OCI-LY7 (cell line): ENCODE measurements at regions of chr9 and their contacts with region 1.

Region 1: GRCh38 chr9:18442629-18443491 is 31.1 kb upstream of the ADAMTSL1 start:
- DNase-seq: peak; percentile 70
- H3K4me3 ChIP-seq: no peak overlapping the region
- H3K27ac ChIP-seq: no peak overlapping the region
- H3K4me1 ChIP-seq: no peaks in the 10 kb centered on the region
- CTCF ChIP-seq: peak; percentile 98

Region 2: GRCh38 chr9:17531642-17532254 is 911.1 kb before region 1 on chr9:
- CTCF ChIA-PET with region 1: no interaction called
- POLR2A ChIA-PET with region 1: interaction called, 11 read pairs
- intact Hi-C with region 1: no loop called
- DNase-seq: peak; percentile 29
- H3K4me3 ChIP-seq: no peak overlapping the region
- H3K27ac ChIP-seq: no peak overlapping the region
- H3K4me1 ChIP-seq: no peaks in the 10 kb centered on the region
- CTCF ChIP-seq: peak; percentile 83

Region 3: GRCh38 chr9:17810728-17811571 is 631.9 kb before region 1 on chr9:
- CTCF ChIA-PET with region 1: no interaction called
- POLR2A ChIA-PET with region 1: no interaction called
- intact Hi-C with region 1: loop called (anchors 2 kb)
- DNase-seq: peak; percentile 68
- H3K4me3 ChIP-seq: no peak overlapping the region
- H3K27ac ChIP-seq: no peak overlapping the region
- H3K4me1 ChIP-seq: no peaks in the 10 kb centered on the region
- CTCF ChIP-seq: peak; percentile 97

Region 4: DNA sequence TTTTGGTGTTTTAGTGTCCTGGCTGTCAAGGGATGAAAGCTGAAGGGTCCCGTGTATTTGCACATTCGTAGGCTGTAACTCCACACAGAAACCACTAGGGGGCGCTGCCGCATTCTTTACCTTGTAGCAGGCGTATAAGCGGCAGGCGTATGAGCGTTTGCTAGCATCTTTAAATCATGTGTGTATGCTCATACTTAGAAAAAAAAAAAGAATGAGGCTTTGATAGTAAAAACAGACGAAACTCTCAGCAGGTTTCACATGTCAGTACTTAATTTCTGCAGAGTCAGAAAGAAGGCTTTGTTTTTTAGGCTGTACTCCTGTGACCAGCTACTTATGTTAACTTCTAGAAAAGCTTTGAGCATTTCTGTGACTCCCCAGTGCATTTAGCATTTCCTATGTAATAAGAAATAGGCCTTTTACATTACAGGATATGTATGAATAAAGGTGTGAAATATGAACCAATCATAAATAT is 187.7 kb before region 1 on chr9:
- CTCF ChIA-PET with region 1: no interaction called
- POLR2A ChIA-PET with region 1: no interaction called
- intact Hi-C with region 1: loop called (anchors 2 kb)
- DNase-seq: peak; percentile 79
- H3K4me3 ChIP-seq: no peak overlapping the region
- H3K27ac ChIP-seq: no peak overlapping the region
- H3K4me1 ChIP-seq: no peaks in the 10 kb centered on the region
- CTCF ChIP-seq: peak; percentile 98

Region 5: GRCh38 chr9:18319918-18320445 is 122.9 kb before region 1 on chr9:
- CTCF ChIA-PET with region 1: no interaction called
- POLR2A ChIA-PET with region 1: no interaction called
- intact Hi-C with region 1: loop called (anchors 10 kb)
- DNase-seq: no peak
- H3K4me3 ChIP-seq: no peak overlapping the region
- H3K27ac ChIP-seq: no peak overlapping the region
- H3K4me1 ChIP-seq: no peaks in the 10 kb centered on the region
- CTCF ChIP-seq: no peak